WTC11 (cell line): ENCODE measurements at regions of chr17 and their contacts with region 1.

Region 1: DNA sequence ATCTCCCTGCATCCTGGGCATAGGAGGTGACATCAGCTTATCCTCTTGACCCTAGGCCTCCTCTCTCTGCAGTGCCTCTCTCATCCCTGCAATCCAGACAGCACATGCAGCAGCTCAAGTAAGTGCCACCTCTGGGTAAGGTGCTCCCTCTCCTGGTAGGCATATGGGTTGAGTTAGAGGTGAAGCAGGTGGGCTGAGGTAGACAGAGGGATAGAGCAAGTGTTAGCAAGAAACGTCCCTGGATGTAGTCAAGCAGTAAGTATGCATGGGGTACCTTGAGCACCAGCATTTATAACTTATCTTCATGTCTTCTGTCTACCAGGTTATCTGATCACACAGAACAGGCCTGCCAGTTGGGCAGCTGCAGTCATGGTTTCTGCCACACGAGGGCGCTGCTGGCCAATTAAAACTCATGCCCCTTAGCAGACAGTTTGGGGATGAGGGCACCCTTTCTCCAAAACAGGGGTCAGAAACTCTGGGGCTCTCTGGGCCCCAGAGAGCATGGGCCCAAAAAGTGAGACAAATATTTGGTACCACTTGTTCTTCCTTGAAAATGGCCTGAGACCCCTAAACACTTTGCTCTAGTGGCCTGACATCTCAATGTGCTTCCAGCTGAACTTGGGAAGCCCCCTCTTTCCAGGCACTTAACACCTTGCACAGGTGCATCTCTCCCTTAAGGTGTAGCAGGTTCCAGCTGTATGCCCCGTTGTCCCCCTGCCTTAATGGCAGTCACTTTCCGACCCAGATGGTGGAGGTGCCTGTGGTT is 59.8 kb downstream of the NEUROD2 start:
- DNase-seq: peak; percentile 88
- ATAC-seq: peak; percentile 91
- H3K4me3 Mint-ChIP-seq: no peak overlapping the region
- H3K27ac Mint-ChIP-seq: no peak overlapping the region; the same call in 1 of the 2 replicates
- H3K4me1 Mint-ChIP-seq: no peaks in the 10 kb centered on the region
- H3K27me3 Mint-ChIP-seq: no peaks in the 10 kb centered on the region; the same call in 1 of the 2 replicates
- CTCF ChIP-seq: peak; percentile 94

Region 2: GRCh38 chr17:39429600-39429999 is 118.3 kb before region 1 on chr17:
- CTCF ChIA-PET with region 1: no interaction called
- POLR2A ChIA-PET with region 1: no interaction called
- DNase-seq: no peak
- ATAC-seq: no peak
- H3K4me3 Mint-ChIP-seq: no peak overlapping the region
- H3K27ac Mint-ChIP-seq: no peak overlapping the region
- H3K4me1 Mint-ChIP-seq: no peaks in the 10 kb centered on the region
- H3K27me3 Mint-ChIP-seq: no peaks in the 10 kb centered on the region
- CTCF ChIP-seq: no peak

Region 3: GRCh38 chr17:39573447-39574298 is 25.8 kb after region 1 on chr17:
- CTCF ChIA-PET with region 1: interaction called, 116 read pairs
- POLR2A ChIA-PET with region 1: no interaction called
- DNase-seq: peak; percentile 70
- ATAC-seq: peak; percentile 82
- H3K4me3 Mint-ChIP-seq: peak overlapping the region; percentile 79
- H3K27ac Mint-ChIP-seq: peak overlapping the region; percentile 73
- H3K4me1 Mint-ChIP-seq: peaks cover 12% of the 10 kb centered on the region
- H3K27me3 Mint-ChIP-seq: peaks cover 30% of the 10 kb centered on the region
- CTCF ChIP-seq: no peak

Region 4: DNA sequence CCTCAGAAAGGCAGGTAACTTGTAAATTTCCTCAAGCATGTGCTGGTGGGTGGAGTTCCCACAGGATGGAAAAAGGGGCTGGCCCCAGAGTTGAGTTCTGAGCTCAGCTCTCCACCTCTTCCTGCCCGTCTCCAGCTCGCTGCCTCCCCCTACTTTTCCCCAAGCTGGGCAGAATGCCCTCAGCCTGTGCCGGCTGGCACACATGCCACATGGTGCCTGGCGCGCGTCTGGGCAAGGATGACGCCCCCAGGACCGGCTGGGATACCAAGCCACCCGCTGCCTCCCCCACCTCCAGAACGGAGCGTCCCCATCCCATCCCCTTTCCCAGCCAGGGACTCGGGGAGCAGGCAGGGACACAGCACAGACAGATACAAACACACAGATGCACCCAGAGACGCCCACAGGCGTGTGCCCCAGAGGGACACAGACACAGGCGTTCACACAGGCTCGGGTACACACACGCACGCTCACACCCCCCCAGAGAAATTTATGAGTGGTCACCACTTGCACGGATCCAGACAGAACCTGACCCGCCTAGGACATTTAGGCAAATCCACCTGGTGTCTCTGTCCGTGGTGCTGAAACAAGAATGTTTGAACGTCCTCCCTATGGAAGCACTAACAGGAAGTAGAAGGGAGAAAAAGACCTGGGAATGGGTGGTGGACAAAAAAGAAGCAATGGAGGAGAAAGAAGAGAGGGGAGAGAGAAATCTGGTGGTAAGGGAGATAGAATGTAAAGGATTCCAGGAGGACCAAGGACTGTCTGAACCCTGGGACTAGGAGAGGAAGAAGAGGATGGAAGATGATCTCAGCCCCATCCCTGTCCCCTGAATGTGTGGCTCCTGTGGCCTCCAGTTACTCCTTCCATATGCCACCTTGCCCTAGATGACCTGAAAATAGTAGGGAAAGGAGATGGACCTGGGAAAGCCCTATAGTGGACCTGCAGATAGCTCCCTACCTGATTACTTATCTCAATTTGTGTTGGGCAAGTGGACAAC is 44.4 kb after region 1 on chr17:
- CTCF ChIA-PET with region 1: interaction called, 86 read pairs
- POLR2A ChIA-PET with region 1: no interaction called
- DNase-seq: peak; percentile 84
- ATAC-seq: peak; percentile 69
- H3K4me3 Mint-ChIP-seq: peak overlapping the region; percentile 46
- H3K27ac Mint-ChIP-seq: no peak overlapping the region
- H3K4me1 Mint-ChIP-seq: peaks cover 29% of the 10 kb centered on the region
- H3K27me3 Mint-ChIP-seq: peaks cover 77% of the 10 kb centered on the region
- CTCF ChIP-seq: no peak

Region 5: DNA sequence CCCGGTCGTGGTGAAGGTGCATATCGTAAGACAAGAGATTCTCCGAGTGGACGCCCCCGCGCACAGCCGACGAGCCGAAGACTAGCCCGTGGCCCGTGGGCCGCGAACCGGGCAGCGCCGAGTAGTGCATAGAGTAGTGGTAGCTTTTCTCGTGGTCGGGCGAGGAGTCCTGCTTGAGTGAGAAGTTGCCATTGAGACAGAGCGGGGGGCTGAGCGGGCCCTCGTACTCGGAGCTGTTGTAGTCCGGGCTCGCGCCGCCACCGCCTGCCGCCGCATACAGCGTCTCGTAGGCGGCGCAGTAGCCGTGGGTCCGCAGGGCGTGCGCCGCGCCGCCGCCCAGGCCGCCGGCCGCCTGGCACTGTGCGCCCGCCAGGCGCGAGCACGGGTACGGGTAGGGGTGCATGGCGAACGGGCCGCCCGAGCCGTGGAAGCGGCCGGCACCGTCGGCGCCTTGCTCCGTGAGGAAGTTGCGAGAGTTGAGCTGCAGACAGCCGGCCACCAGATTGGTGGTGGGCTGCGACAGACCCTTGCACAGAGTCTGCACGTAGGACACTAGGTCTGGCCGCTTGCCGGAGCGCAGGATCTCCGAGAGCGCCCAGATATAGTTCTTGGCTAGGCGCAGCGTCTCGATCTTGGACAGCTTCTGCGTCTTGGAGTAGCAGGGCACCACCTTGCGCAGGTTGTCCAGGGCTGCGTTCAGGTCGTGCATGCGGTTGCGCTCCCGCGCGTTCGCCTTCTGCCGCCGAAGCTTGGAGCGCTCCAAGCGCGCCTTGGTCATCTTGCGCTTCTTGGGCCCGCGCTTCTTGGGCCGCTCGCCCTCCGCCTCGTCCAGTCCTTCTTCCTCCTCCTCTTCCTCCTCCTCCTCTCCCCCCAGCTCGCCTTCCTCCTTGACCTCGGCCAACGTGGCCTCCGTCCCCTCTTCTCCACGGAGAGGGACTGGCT is 57.9 kb after region 1 on chr17:
- CTCF ChIA-PET with region 1: interaction called, 86 read pairs
- POLR2A ChIA-PET with region 1: no interaction called
- DNase-seq: peak; percentile 48
- ATAC-seq: peak; percentile 19
- H3K4me3 Mint-ChIP-seq: peak overlapping the region; percentile 60
- H3K27ac Mint-ChIP-seq: no peak overlapping the region
- H3K4me1 Mint-ChIP-seq: peaks cover 45% of the 10 kb centered on the region
- H3K27me3 Mint-ChIP-seq: peaks cover 100% of the 10 kb centered on the region
- CTCF ChIP-seq: no peak

Region 6: GRCh38 chr17:39643271-39643670 is 95.4 kb after region 1 on chr17:
- CTCF ChIA-PET with region 1: interaction called, 10 read pairs
- POLR2A ChIA-PET with region 1: no interaction called
- DNase-seq: no peak
- ATAC-seq: no peak
- H3K4me3 Mint-ChIP-seq: no peak overlapping the region
- H3K27ac Mint-ChIP-seq: 0 out of 2 replicates have a peak overlapping the region, but pooled peaks have one; percentile 37
- H3K4me1 Mint-ChIP-seq: peaks cover 55% of the 10 kb centered on the region
- H3K27me3 Mint-ChIP-seq: no peaks in the 10 kb centered on the region
- CTCF ChIP-seq: no peak